K562 (cell line): ENCODE measurements at regions of chr1 and their contacts with region 1.

Region 1: DNA sequence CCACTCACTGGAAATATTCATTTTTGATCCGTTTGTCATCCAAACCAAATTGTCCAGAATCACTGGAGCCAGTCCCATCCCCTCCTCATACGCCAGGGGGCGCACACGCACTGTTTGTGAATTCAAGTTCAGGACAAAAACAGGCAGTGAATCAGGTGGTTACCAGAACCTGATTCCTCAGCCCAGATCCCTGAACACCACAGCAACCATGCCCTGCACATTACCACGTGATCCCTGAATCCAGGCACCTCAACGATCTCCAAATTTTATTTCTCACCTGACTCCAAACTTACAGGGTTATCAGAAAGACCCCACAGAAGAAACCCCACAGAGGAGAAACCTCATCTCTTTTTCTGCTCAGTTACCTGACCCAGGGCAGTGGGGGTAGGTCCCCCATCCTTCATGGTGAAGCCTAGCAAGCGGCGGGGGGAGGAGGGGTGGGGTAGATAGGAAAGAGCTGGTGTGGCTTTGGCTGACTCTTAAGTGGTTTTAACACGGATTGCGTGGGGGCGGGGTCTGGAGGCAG is 1.4 kb upstream of the PTPRF start:
- DNase-seq: peak; percentile 76 to 92 (median 83)
- ATAC-seq: peak; percentile 84
- H3K4me3 ChIP-seq: no peak overlapping the region
- H3K27ac ChIP-seq: no peak overlapping the region
- H3K4me1 ChIP-seq: peaks cover 12 to 28% of the 10 kb centered on the region in 2 experiments; a peak in 4 of 5 replicates
- H3K27me3 ChIP-seq: peaks cover 26 to 37% of the 10 kb centered on the region in 2 experiments; a peak in 4 of 5 replicates
- CTCF ChIP-seq: peak; percentile 89 to 98 (median 98)
- EP300 ChIP-seq: no peak
- POLR2A ChIP-seq: no peak
- RAD21 ChIP-seq: peak; percentile 91 to 98

Region 2: GRCh38 chr1:43554444-43554992 is 25.2 kb after region 1 on chr1:
- CTCF ChIA-PET with region 1: no interaction called
- POLR2A ChIA-PET with region 1: interaction called, 16 read pairs
- in situ Hi-C with region 1: no loop called
- intact Hi-C with region 1: no loop called
- DNase-seq: peak in 3 of 4 experiments; percentile 33 to 67 (median 64)
- ATAC-seq: peak; percentile 73
- H3K4me3 ChIP-seq: no peak overlapping the region
- H3K27ac ChIP-seq: no peak overlapping the region
- H3K4me1 ChIP-seq: peaks cover 8 to 27% of the 10 kb centered on the region in 2 experiments; a peak in 4 of 5 replicates
- H3K27me3 ChIP-seq: peaks cover 12 to 47% of the 10 kb centered on the region in 2 experiments
- CTCF ChIP-seq: peak; percentile 63 to 76 (median 73)
- EP300 ChIP-seq: no peak
- POLR2A ChIP-seq: no peak
- RAD21 ChIP-seq: peak in 1 of 2 experiments; percentile 46; a peak in 1 of 4 replicates

Region 3: DNA sequence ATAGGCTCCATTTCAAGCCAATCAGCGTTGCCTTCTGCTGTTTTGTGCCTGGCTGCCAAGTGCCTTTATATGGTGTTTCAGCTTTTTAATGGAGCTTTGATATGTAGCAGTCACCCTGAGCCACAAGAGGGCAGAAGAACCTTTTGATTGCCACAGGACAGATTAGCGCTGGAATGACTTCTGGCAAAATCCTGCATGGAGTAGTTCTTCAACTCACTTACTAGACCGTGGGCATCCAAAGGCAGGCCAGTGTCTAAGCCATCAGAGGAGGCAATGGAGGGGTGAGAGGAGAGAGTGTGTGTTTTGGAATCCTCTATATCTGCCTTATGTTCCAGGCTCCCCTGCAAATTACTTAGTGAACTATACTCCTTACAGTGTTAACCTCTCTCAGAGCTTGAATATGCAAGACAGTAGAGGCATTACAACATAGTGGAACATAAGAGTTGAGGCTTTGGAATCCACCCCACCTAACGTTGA is 234.3 kb after region 1 on chr1:
- CTCF ChIA-PET with region 1: interaction called, 14 read pairs
- POLR2A ChIA-PET with region 1: no interaction called
- in situ Hi-C with region 1: no loop called
- intact Hi-C with region 1: loop called (anchors 1 kb)
- DNase-seq: peak; percentile 58 to 84 (median 66)
- ATAC-seq: peak; percentile 95
- H3K4me3 ChIP-seq: no peak overlapping the region
- H3K27ac ChIP-seq: no peak overlapping the region
- H3K4me1 ChIP-seq: peaks cover 7 to 26% of the 10 kb centered on the region in 2 experiments; a peak in 3 of 5 replicates
- H3K27me3 ChIP-seq: no peaks in the 10 kb centered on the region
- CTCF ChIP-seq: peak; percentile 92 to 98 (median 92)
- EP300 ChIP-seq: no peak
- POLR2A ChIP-seq: no peak
- RAD21 ChIP-seq: peak; percentile 98